ENCODE measurements at regions of chr1 and their contacts with region 1.

Region 1: DNA sequence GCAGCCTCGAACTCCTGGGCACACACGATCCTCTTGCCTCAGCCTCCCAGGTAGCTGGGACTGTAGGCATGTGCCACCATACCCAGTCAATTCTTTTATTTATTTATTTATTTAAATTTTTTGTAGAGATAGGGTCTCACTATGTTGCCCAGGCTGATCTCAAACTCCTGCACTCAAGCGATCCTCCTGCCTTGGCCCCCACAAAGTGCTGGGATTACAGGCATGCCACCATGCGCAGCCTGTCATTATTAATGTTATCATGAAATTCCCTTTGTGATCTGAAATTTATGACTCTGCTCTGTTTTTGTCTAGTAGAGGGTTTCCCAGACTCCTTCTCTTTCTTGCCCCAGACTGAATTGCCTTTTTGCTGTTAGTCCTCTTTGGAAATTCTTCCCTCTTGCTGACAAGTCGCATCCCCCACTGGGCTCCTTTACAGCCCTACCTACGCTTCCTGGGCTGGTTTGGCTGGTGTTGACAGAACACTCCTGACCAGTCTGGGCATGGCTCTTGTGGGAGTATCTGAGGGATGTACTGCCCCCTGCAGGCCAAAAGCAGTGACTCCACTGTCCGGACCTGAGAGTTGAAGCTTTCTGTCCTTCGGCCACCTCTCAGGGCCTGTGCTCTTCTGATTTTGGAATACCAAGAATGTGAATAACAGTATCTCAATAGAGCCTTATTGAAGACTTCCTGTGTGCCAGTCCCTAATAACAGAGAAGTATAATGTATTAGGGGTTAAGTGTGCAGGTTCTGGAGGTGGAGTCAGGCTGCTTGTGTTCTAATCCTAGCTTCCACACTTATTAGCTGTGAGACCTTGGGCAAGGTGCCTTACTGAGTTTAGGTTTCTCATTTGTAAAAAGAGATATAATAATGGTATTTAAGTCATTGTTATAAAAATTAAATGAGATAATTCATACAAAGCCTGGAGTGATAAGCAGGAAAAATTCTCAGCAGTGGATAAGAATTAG is 28.2 kb downstream of the TCEANC2 start:
- DNase-seq: peak; percentile 84
- H3K4me3 Mint-ChIP-seq: no peak overlapping the region
- H3K27ac Mint-ChIP-seq: peak overlapping the region; percentile 40
- H3K4me1 Mint-ChIP-seq: peaks cover 6% of the 10 kb centered on the region
- H3K27me3 Mint-ChIP-seq: no peaks in the 10 kb centered on the region
- CTCF ChIP-seq: peak; percentile 47

Region 2: GRCh38 chr1:53982034-53982762 is 99.4 kb before region 1 on chr1:
- CTCF ChIA-PET with region 1: no interaction called
- POLR2A ChIA-PET with region 1: no interaction called
- intact Hi-C with region 1: no loop called
- DNase-seq: no peak
- H3K4me3 Mint-ChIP-seq: peak overlapping the region; percentile 34
- H3K27ac Mint-ChIP-seq: no peak overlapping the region
- H3K4me1 Mint-ChIP-seq: no peaks in the 10 kb centered on the region
- H3K27me3 Mint-ChIP-seq: no peaks in the 10 kb centered on the region
- CTCF ChIP-seq: no peak

Region 3: DNA sequence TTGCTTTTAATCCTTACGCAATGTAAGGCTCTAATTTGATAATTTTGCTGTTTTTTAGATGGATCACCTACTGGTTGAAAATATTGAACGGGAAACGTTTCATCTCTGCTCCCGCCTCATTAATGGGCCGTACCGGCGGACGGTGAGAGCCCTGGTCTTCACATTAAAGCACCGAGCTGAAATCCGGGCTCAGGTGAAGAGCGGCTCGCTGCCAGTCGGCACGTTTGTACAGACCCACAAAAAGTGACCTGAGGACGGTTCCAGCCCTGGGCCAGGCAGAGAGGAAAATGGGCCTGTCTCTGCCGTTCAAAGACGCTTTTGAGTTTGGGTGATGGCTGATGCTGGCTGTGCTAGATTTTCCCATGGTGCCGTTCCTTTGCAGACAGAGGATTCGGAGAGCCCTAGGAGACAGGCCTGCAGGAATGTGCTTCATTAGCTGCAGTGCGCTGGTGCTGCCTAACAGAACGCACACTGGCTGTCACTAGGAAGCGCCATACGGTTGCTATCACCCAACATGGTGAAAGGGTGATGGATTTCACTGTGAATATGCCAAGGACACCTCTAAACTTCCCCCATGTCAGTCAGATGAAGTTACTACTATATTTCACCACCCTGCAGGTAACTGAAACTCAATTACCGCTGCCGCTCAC is 14.8 kb after region 1 on chr1:
- CTCF ChIA-PET with region 1: interaction called, 20 read pairs
- POLR2A ChIA-PET with region 1: interaction called, 4 read pairs
- intact Hi-C with region 1: no loop called
- DNase-seq: no peak
- H3K4me3 Mint-ChIP-seq: no peak overlapping the region
- H3K27ac Mint-ChIP-seq: no peak overlapping the region
- H3K4me1 Mint-ChIP-seq: no peaks in the 10 kb centered on the region
- H3K27me3 Mint-ChIP-seq: no peaks in the 10 kb centered on the region
- CTCF ChIP-seq: no peak

Region 4: GRCh38 chr1:54396261-54396933 is 314.8 kb after region 1 on chr1:
- CTCF ChIA-PET with region 1: no interaction called
- POLR2A ChIA-PET with region 1: no interaction called
- intact Hi-C with region 1: no loop called
- DNase-seq: no peak
- H3K4me3 Mint-ChIP-seq: no peak overlapping the region
- H3K27ac Mint-ChIP-seq: no peak overlapping the region
- H3K4me1 Mint-ChIP-seq: no peaks in the 10 kb centered on the region
- H3K27me3 Mint-ChIP-seq: no peaks in the 10 kb centered on the region
- CTCF ChIP-seq: no peak

Region 5: DNA sequence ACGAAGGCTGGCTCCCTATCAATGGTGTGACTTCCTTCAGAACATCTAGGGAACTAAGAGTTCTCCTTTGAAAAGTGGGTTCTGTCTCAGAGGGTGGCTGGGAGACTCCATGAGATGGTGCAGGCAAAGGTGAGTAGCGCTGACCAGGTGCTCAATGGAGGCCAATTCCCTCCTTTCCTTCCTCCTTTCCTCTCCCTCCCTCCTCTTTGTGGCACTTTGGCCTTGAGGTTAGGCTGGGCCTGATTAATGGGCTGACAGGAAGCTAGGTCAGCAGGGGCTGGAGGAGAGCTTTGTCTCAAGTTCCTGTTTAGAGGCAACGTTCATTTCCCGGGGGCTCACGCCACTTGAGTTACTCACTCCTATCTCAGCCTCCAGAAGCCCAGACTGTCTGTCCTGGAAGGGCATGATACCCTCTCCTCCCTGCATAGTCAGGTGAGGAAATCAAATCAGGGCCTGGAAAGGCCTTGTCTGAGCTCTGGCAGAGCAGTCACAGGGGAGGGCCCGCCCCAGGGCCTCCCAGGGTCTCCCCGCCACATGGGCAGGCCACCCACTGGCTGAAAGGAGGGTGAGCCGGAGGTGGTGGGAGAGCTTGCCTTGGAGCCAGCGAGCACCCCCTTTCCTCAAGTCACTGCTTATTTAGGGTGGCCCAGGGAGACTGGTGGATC is 383.0 kb after region 1 on chr1:
- CTCF ChIA-PET with region 1: no interaction called
- POLR2A ChIA-PET with region 1: no interaction called
- intact Hi-C with region 1: no loop called
- DNase-seq: no peak
- H3K4me3 Mint-ChIP-seq: no peak overlapping the region
- H3K27ac Mint-ChIP-seq: no peak overlapping the region
- H3K4me1 Mint-ChIP-seq: no peaks in the 10 kb centered on the region
- H3K27me3 Mint-ChIP-seq: no peaks in the 10 kb centered on the region
- CTCF ChIP-seq: no peak

Measured in MCF 10A (cell line).